IMR-90 (cell line): ENCODE measurements at regions of chr19 and their contacts with region 1.

Region 1: GRCh38 chr19:12676384-12676792 is 5.3 kb downstream of the DHPS start:
- DNase-seq: peak; percentile 66
- ATAC-seq: peak; percentile 69
- H3K4me3 ChIP-seq: no peak overlapping the region
- H3K27ac ChIP-seq: no peak overlapping the region
- H3K4me1 ChIP-seq: no peaks in the 10 kb centered on the region
- H3K27me3 ChIP-seq: no peaks in the 10 kb centered on the region
- CTCF ChIP-seq: peak; percentile 75
- POLR2A ChIP-seq: no peak
- RAD21 ChIP-seq: peak; percentile 50

Region 2: GRCh38 chr19:12465211-12465610 is 211.2 kb before region 1 on chr19:
- CTCF ChIA-PET with region 1: no interaction called
- POLR2A ChIA-PET with region 1: no interaction called
- dilution Hi-C with region 1: no loop called
- in situ Hi-C with region 1: no loop called
- intact Hi-C with region 1: no loop called
- DNase-seq: no peak
- ATAC-seq: no peak
- H3K4me3 ChIP-seq: no peak overlapping the region
- H3K27ac ChIP-seq: no peak overlapping the region
- H3K4me1 ChIP-seq: no peaks in the 10 kb centered on the region
- H3K27me3 ChIP-seq: no peaks in the 10 kb centered on the region
- CTCF ChIP-seq: no peak
- POLR2A ChIP-seq: no peak
- RAD21 ChIP-seq: no peak

Region 3: GRCh38 chr19:12796146-12797071 is 120.0 kb after region 1 on chr19:
- CTCF ChIA-PET with region 1: interaction called, 3 read pairs
- POLR2A ChIA-PET with region 1: no interaction called
- dilution Hi-C with region 1: no loop called
- in situ Hi-C with region 1: no loop called
- intact Hi-C with region 1: loop called (anchors 1 kb)
- DNase-seq: peak; percentile 81
- ATAC-seq: peak; percentile 38
- H3K4me3 ChIP-seq: no peak overlapping the region
- H3K27ac ChIP-seq: no peak overlapping the region
- H3K4me1 ChIP-seq: peaks cover 6% of the 10 kb centered on the region
- H3K27me3 ChIP-seq: no peaks in the 10 kb centered on the region
- CTCF ChIP-seq: peak; percentile 98; the same call in 1 of the 2 replicates
- POLR2A ChIP-seq: peak; percentile 76; the same call in 1 of the 2 replicates
- RAD21 ChIP-seq: peak; percentile 99

Region 4: DNA sequence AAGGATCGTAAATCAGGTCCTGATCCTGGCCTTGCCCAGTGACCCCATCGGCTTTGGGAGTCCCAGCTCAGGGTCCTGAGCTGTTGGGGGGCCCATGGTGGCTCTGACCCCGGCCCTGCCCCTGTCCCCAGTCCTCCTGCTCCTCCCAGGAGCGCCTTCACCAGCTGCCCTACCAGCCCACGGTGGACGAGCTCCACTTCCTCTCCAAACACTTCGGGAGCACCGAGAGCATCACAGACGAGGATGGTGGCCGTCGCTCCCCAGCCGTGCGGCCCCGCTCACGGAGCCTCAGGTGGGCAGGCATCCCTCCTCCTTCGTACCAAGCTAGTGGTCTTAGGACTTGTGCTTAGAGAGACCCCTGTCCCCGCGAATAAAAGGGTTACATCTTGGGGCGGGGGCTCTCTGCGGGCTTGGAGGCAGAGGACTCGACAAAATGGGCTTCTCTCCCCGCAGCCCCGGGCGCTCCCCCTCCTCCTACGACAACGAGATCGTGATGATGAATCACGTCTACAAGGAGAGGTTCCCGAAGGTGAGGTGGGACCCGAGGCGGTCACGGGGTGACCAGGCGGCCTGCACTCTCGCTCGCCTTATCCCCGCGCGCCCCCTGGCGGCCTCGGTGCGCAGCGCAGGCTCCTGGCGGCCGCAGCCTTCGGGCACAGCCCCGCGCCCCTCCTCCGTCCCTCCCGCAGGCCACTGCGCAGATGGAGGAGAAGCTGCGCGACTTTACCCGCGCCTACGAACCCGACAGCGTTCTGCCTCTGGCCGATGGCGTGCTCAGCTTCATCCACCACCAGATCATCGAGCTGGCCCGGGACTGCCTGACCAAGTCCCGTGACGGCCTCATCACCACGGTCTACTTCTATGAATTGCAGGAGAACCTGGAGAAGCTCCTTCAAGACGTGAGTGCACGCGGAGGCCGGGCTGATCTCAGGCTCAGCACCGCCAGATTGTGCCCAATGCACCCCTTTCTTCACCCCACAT is 171.1 kb after region 1 on chr19:
- CTCF ChIA-PET with region 1: interaction called, 3 read pairs
- POLR2A ChIA-PET with region 1: no interaction called
- dilution Hi-C with region 1: no loop called
- in situ Hi-C with region 1: no loop called
- intact Hi-C with region 1: loop called (anchors 1 kb)
- DNase-seq: peak; percentile 73
- ATAC-seq: peak; percentile 100
- H3K4me3 ChIP-seq: peak overlapping the region; percentile 21; the same call in 1 of the 2 replicates
- H3K27ac ChIP-seq: no peak overlapping the region
- H3K4me1 ChIP-seq: peaks cover 3% of the 10 kb centered on the region; the same call in 1 of the 2 replicates
- H3K27me3 ChIP-seq: peaks cover 10% of the 10 kb centered on the region; the same call in 1 of the 2 replicates
- CTCF ChIP-seq: peak; percentile 98
- POLR2A ChIP-seq: no peak
- RAD21 ChIP-seq: peak; percentile 96